ENCODE measurements at regions of chr4 and their contacts with region 1.

Region 1: GRCh38 chr4:186104114-186104889 is at the start of gene FAM149A:
- DNase-seq: peak; percentile 81
- H3K4me3 ChIP-seq: peak within 1 kb of the TSS; percentile 55 to 85 (median 72)
- H3K27ac ChIP-seq: peak within 1 kb of the TSS; percentile 53 to 72 (median 67)
- H3K4me1 ChIP-seq: peaks cover 0 to 18% (median 15%) of the 10 kb centered on the region in 4 donors
- H3K27me3 ChIP-seq: no peaks in the 10 kb centered on the region
- CTCF ChIP-seq: no peak
- EP300 ChIP-seq: no peak
- POLR2A ChIP-seq: no peak
- total RNA-seq, gene FAM149A: 14.6 to 26.0 (median 21.0) TPM

Region 2: GRCh38 chr4:186144142-186144955 is 40.0 kb after region 1 on chr4:
- intact Hi-C with region 1: loop called (anchors 5 kb)
- DNase-seq: peak; percentile 79
- H3K4me3 ChIP-seq: peak overlapping the region; percentile 55 to 70 (median 64)
- H3K27ac ChIP-seq: peak overlapping the region; percentile 88 to 94 (median 88)
- H3K4me1 ChIP-seq: peaks cover 0 to 16% (median 6%) of the 10 kb centered on the region in 4 donors
- H3K27me3 ChIP-seq: no peaks in the 10 kb centered on the region
- CTCF ChIP-seq: peak; percentile 21 to 52 (median 36)
- EP300 ChIP-seq: no peak
- POLR2A ChIP-seq: no peak